ENCODE measurements at regions of chrX and their contacts with region 1.

Region 1: GRCh38 chrX:129726307-129727111 is 12.3 kb upstream of the XPNPEP2 start:
- DNase-seq: peak; percentile 36 to 63
- ATAC-seq: peak; percentile 87 to 97
- H3K4me3 ChIP-seq: no peak overlapping the region
- H3K27ac ChIP-seq: no peak overlapping the region
- H3K4me1 ChIP-seq: no peaks in the 10 kb centered on the region
- CTCF ChIP-seq: peak; percentile 76
- EP300 ChIP-seq: no peak
- POLR2A ChIP-seq: no peak
- RAD21 ChIP-seq: peak; percentile 89 to 94

Region 2: DNA sequence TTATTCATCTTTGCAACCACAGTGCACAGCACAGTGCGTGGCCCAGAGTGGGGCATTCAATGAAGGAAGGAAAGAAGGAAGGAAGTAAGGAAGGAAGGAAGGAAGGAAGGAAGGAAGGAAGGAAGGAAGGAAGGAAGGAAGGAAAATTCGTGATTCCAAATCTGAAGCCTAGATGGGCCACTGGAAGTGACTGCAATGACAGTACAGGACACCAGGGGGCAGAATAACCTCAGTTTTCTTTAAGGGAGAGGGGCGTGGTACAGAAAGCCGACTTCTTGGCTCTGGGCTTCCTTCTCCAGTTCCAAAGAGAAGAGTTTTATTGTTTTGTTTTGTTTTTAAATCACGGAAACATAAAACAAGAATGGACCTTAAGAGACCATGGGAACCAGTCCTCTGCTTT is 119.6 kb before region 1 on chrX:
- CTCF ChIA-PET with region 1: interaction called, 73 read pairs
- POLR2A ChIA-PET with region 1: no interaction called
- DNase-seq: peak; percentile 47 to 62
- ATAC-seq: peak; percentile 59 to 69; a peak in 4 of 6 replicates
- H3K4me3 ChIP-seq: no peak overlapping the region
- H3K27ac ChIP-seq: no peak overlapping the region
- H3K4me1 ChIP-seq: peaks cover 4% of the 10 kb centered on the region; the same call in 1 of the 3 replicates
- CTCF ChIP-seq: peak; percentile 72
- EP300 ChIP-seq: no peak
- POLR2A ChIP-seq: no peak
- RAD21 ChIP-seq: peak; percentile 83 to 87

Region 3: DNA sequence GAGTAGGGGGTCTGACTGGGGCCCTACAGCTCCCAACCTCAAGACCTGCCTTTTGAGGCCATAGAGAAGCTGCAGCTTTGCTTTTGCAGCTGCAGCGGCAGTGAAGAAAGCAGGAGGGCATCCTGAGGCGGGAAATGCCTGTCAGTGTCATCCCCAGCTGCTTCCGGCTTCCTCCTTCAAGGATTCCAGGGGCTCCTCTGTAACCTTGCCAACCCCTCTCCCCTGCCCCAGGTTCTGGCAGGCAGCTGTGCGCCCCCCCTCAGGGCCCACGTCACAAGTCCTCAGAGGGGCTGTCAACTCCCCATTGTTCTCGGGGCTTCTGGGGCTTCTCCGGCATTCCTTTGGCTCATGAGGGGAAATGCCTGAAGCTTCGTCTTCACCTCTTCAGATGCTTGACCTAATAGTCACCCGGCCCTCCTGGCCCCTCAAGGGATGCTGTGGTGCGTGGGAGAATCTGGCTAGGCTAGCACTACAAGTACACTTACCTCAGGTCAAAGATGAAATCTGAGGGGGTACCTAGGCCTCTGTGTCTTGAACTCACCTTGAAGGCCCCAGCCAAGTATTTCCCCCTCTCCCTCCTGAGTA is 103.7 kb before region 1 on chrX:
- CTCF ChIA-PET with region 1: interaction called, 20 read pairs
- POLR2A ChIA-PET with region 1: no interaction called
- DNase-seq: no peak
- ATAC-seq: no peak
- H3K4me3 ChIP-seq: no peak overlapping the region
- H3K27ac ChIP-seq: no peak overlapping the region
- H3K4me1 ChIP-seq: no peaks in the 10 kb centered on the region
- CTCF ChIP-seq: no peak
- EP300 ChIP-seq: no peak
- POLR2A ChIP-seq: no peak
- RAD21 ChIP-seq: no peak

Region 4: DNA sequence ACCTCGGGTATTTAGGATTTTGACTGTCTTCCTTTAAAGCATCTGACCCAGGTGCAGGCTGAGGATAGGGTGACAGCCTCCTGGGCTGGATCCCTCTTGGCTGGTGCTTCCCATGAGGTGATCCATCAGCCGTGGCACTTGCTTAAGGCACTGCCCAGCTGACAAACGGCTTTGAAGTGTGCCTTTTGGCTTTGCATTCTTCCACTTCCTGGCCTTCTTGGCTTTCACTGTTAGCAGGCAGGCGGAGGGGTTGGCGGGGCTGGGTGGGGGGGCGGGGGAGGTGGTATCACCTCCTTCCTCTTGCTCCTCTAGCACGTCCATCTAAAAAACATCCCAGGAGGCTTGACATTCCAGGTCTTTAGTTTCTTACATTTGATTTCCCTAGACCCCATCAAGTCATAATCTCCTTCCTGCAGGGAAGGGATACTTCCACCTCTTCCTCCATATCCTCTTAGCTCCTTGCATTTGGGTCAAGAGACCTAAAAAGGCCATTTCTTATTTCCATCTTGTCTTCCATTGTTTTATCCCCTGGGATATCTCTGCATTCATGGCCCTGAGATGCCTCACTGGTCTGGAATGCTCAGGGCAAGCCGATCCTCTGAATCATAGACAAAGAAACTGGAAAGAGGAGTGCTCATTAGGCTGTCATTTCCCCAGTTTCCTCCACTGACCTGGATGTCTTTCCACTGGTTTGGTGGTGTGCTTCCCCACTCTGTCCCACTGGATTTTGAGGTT is 60.4 kb before region 1 on chrX:
- CTCF ChIA-PET with region 1: interaction called, 12 read pairs
- POLR2A ChIA-PET with region 1: no interaction called
- DNase-seq: peak; percentile 66 to 67
- ATAC-seq: peak; percentile 98 to 99
- H3K4me3 ChIP-seq: no peak overlapping the region
- H3K27ac ChIP-seq: peak overlapping the region; percentile 68 to 85
- H3K4me1 ChIP-seq: peaks cover 20% of the 10 kb centered on the region
- CTCF ChIP-seq: no peak
- EP300 ChIP-seq: no peak
- POLR2A ChIP-seq: no peak
- RAD21 ChIP-seq: no peak

Region 5: DNA sequence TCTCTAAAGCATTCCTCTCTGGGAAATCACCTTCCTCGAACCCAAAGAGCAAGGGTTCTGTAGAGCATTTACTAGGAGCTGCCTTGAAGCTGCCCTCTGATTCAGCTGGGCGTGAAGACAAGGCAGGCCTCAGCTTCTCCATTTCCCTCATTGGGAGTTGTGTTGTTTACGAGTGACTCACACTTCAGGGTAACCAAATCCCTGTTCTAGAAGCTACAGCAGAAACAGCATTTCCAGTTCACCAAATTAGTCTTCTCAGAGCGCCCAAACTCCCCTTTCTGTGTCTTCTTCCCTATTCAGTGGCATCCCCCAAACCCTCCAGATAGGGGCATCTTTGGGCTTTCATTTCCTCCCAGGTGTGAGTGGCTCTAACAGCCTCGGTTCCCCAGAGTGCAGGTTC is 11.4 kb after region 1 on chrX:
- CTCF ChIA-PET with region 1: interaction called, 37 read pairs
- POLR2A ChIA-PET with region 1: no interaction called
- DNase-seq: no peak
- ATAC-seq: no peak
- H3K4me3 ChIP-seq: no peak overlapping the region
- H3K27ac ChIP-seq: no peak overlapping the region
- H3K4me1 ChIP-seq: no peaks in the 10 kb centered on the region
- CTCF ChIP-seq: no peak
- EP300 ChIP-seq: no peak
- POLR2A ChIP-seq: no peak
- RAD21 ChIP-seq: no peak

Region 6: DNA sequence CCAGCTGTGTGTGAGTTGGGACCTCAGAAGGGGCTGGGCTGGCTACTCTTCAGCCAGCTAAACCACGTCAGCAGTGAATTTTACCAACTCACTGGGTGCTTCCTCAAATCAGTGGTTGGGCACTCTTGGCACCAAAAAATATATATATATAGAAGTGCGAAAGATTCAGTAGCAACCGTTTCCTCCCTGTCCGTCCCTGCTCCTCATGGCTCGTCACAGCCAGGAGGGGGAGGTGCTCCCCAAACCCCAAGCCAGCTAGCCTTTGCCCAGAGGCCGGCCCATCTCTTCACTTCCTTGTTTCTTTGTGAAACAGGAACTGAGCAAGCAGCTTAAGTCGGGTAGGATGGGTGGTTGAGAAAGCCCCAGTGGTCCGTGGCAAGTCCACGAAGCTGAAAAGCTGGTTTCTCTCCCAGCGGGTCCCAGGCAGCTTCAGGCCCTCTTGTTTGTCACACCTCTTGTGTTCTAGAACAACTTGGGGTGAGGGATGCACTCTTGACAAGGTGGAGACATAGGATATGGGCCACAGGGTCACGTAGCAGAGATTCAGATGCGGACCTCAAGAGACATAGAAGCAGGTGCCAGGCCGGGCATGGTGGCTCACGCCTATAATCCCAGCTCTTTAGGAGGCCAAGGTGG is 46.4 kb after region 1 on chrX:
- CTCF ChIA-PET with region 1: no interaction called
- POLR2A ChIA-PET with region 1: no interaction called
- DNase-seq: no peak
- ATAC-seq: no peak
- H3K4me3 ChIP-seq: no peak overlapping the region
- H3K27ac ChIP-seq: no peak overlapping the region
- H3K4me1 ChIP-seq: no peaks in the 10 kb centered on the region
- CTCF ChIP-seq: no peak
- EP300 ChIP-seq: no peak
- POLR2A ChIP-seq: no peak
- RAD21 ChIP-seq: no peak

Region 7: GRCh38 chrX:130082244-130083106 is 356.0 kb after region 1 on chrX:
- CTCF ChIA-PET with region 1: no interaction called
- POLR2A ChIA-PET with region 1: no interaction called
- DNase-seq: no peak
- ATAC-seq: no peak; a peak in 1 of 6 replicates
- H3K4me3 ChIP-seq: no peak overlapping the region
- H3K27ac ChIP-seq: no peak overlapping the region
- H3K4me1 ChIP-seq: 0 out of 3 replicates have a peak, but pooled peaks cover 3% of the 10 kb centered on the region
- CTCF ChIP-seq: no peak
- EP300 ChIP-seq: no peak
- POLR2A ChIP-seq: no peak
- RAD21 ChIP-seq: no peak

Region 8: DNA sequence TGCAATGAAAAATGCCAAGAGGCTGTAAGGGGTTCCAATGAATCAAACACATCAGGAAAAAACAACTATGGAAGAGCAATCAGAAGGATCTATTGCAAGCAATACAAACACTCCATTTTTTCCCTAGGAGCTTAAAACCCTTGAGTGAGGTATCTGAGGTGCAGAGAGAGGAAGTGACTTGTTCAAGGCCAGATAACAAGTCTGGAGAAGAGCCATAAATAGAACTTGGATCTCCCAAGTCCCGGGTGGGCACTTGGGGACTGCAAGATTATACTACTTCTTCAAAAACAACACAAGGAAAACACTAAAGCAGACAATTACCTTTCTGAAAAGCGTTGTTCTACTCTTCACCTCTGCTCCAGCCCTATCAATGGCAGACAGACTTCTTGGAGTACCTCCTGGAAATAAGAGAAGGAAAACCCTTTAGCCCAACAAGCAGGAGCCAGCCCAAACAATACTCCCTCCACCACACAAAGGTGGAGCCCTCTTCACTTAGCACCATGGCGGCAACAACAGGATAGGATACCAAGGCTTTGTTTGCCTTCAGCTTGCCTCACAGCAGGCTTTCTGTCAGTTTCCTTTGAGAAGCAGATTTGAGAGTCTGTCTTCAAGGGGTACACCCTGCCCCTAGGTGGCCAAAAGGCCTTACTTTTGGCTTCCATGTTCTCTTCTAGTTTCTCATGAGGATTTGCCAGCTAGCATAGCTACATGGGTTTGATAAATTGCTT is 413.1 kb after region 1 on chrX:
- CTCF ChIA-PET with region 1: no interaction called
- POLR2A ChIA-PET with region 1: no interaction called
- DNase-seq: no peak
- ATAC-seq: no peak
- H3K4me3 ChIP-seq: no peak overlapping the region
- H3K27ac ChIP-seq: no peak overlapping the region
- H3K4me1 ChIP-seq: no peaks in the 10 kb centered on the region
- CTCF ChIP-seq: no peak
- EP300 ChIP-seq: no peak
- POLR2A ChIP-seq: no peak
- RAD21 ChIP-seq: no peak